ENCODE measurements at regions of chr2 and their contacts with region 1.

Region 1: GRCh38 chr2:191051825-191052778 is 38.1 kb upstream of the STAT1 start:
- DNase-seq: peak in 1 of 2 donors; percentile 7
- ATAC-seq: peak in 3 of 8 donors; percentile 34 to 40 (median 40)
- H3K4me3 ChIP-seq: no peak overlapping the region
- H3K27ac ChIP-seq: peak overlapping the region in 1 of 10 donors; percentile 24
- H3K4me1 ChIP-seq: peaks cover 0 to 45% (median 0%) of the 10 kb centered on the region in 9 donors
- H3K27me3 ChIP-seq: no peaks in the 10 kb centered on the region
- CTCF ChIP-seq: peak; percentile 15 to 70 (median 64)

Region 2: GRCh38 chr2:190858817-190859216 is 193.3 kb before region 1 on chr2:
- intact Hi-C with region 1: no loop called
- DNase-seq: no peak
- ATAC-seq: peak in 1 of 8 donors; percentile 49
- H3K4me3 ChIP-seq: no peak overlapping the region
- H3K27ac ChIP-seq: no peak overlapping the region
- H3K4me1 ChIP-seq: peaks cover 0 to 25% (median 13%) of the 10 kb centered on the region in 9 donors
- H3K27me3 ChIP-seq: no peaks in the 10 kb centered on the region
- CTCF ChIP-seq: no peak

Region 3: GRCh38 chr2:191150600-191151330 is 98.7 kb after region 1 on chr2 and contains the start of gene STAT4:
- intact Hi-C with region 1: loop called in 9 of 10 experiments (anchors 2 to 10 kb)
- DNase-seq: peak; percentile 19 to 29
- ATAC-seq: peak in 7 of 8 donors; percentile 57 to 86 (median 80)
- H3K4me3 ChIP-seq: peak within 1 kb of the TSS; percentile 37 to 66 (median 53)
- H3K27ac ChIP-seq: peak within 1 kb of the TSS in 4 of 10 donors; percentile 2 to 84 (median 59)
- H3K4me1 ChIP-seq: peaks cover 0 to 24% (median 4%) of the 10 kb centered on the region in 9 donors
- H3K27me3 ChIP-seq: no peaks in the 10 kb centered on the region
- CTCF ChIP-seq: no peak
- total RNA-seq, gene STAT4: 0.52 to 9.4 (median 2.2) TPM

Region 4: GRCh38 chr2:191501561-191502168 is 449.6 kb after region 1 on chr2:
- intact Hi-C with region 1: loop called in 1 of 10 experiments (anchors 10 kb)
- DNase-seq: no peak
- ATAC-seq: peak in 6 of 8 donors; percentile 50 to 77 (median 64)
- H3K4me3 ChIP-seq: no peak overlapping the region
- H3K27ac ChIP-seq: peak overlapping the region in 7 of 10 donors; percentile 41 to 61 (median 51)
- H3K4me1 ChIP-seq: peaks cover 0 to 26% (median 7%) of the 10 kb centered on the region in 9 donors
- H3K27me3 ChIP-seq: no peaks in the 10 kb centered on the region
- CTCF ChIP-seq: peak; percentile 42 to 83 (median 72)

Region 5: DNA sequence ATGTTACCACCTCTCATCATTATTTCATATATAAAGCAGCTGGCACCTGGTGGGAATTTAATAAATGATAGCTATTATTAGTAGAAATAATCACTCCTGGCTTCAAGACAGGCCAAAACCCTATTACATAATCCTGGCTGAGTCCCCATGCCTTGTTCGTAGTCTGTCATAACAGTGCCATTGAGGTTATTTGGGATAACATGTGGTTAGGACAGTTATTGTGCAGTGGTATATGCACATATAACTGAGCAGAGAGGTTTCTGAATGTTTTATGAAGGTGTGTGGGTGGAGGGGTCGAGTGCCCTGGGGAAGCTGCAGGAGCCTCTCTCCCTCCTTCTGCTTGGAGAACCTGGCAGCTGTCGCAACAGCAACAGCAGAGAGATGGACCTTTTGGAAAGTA is 463.4 kb after region 1 on chr2:
- intact Hi-C with region 1: loop called in 8 of 10 experiments (anchors 5 to 10 kb)
- DNase-seq: no peak
- ATAC-seq: peak in 2 of 8 donors; percentile 42 to 45
- H3K4me3 ChIP-seq: no peak overlapping the region
- H3K27ac ChIP-seq: no peak overlapping the region
- H3K4me1 ChIP-seq: peaks cover 0 to 7% (median 0%) of the 10 kb centered on the region in 9 donors
- H3K27me3 ChIP-seq: no peaks in the 10 kb centered on the region
- CTCF ChIP-seq: no peak

Region 6: GRCh38 chr2:191521608-191522208 is 469.6 kb after region 1 on chr2:
- intact Hi-C with region 1: loop called in 8 of 10 experiments (anchors 5 to 10 kb)
- DNase-seq: no peak
- ATAC-seq: no peak
- H3K4me3 ChIP-seq: no peak overlapping the region
- H3K27ac ChIP-seq: no peak overlapping the region
- H3K4me1 ChIP-seq: no peaks in the 10 kb centered on the region
- H3K27me3 ChIP-seq: no peaks in the 10 kb centered on the region
- CTCF ChIP-seq: peak; percentile 59 to 92 (median 83)